Spleen (tissue), 13 donors: ENCODE measurements at regions of chr19 and their contacts with region 1.

Region 1: GRCh38 chr19:54325194-54325621 is 12.2 kb upstream of the LILRA5 start:
- DNase-seq: no peak
- H3K4me3 ChIP-seq: no peak overlapping the region
- H3K27ac ChIP-seq: peak overlapping the region in 4 of 8 donors; percentile 5 to 53 (median 25)
- H3K4me1 ChIP-seq: peaks cover 0 to 42% (median 24%) of the 10 kb centered on the region in 6 donors
- H3K27me3 ChIP-seq: peaks cover 0 to 6% (median 0%) of the 10 kb centered on the region in 7 donors
- CTCF ChIP-seq: peak; percentile 52 to 90 (median 82)
- POLR2A ChIP-seq: no peak

Region 2: GRCh38 chr19:54062643-54063042 is 262.6 kb before region 1 on chr19:
- intact Hi-C with region 1: no loop called
- DNase-seq: peak; percentile 91
- H3K4me3 ChIP-seq: peak overlapping the region in 2 of 8 donors; percentile 2 to 40
- H3K27ac ChIP-seq: peak overlapping the region in 5 of 8 donors; percentile 67 to 82 (median 77)
- H3K4me1 ChIP-seq: peaks cover 0 to 16% (median 0%) of the 10 kb centered on the region in 6 donors
- H3K27me3 ChIP-seq: peaks cover 0 to 54% (median 0%) of the 10 kb centered on the region in 7 donors
- CTCF ChIP-seq: no peak
- POLR2A ChIP-seq: no peak

Region 3: DNA sequence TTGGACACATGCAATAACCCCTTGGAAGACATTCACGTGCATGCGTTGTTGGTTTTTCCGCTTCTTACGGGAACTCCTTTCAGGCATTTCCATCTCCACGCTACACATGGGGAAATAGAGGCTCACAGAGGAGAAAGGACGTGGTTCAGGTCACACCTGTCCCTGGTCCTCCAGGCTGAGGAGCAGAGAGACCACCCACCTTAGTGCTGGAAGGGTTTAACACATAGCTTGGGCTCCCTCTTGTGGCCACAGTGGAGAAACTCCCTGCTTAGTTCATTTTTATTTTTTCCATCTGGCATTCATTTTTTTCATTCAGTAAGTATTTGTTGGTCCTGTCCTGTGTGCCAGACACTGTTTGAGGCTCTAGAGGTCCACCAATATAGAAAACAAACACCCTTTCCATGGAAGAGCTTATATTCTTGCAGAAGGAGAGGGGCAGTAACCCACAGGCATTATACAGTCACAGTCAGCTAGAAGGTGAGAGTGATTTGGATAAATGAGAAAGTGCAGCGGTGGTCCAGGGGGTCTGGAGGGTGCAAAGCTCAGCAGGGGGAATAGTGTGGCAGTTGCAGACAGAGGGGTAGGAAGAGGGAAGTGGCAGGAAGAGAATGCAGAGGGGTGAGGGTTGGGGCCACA is 65.9 kb after region 1 on chr19:
- intact Hi-C with region 1: loop called (anchors 2 kb)
- DNase-seq: no peak
- H3K4me3 ChIP-seq: no peak overlapping the region
- H3K27ac ChIP-seq: peak overlapping the region in 1 of 8 donors; percentile 86
- H3K4me1 ChIP-seq: peaks cover 9 to 50% (median 42%) of the 10 kb centered on the region in 6 donors
- H3K27me3 ChIP-seq: peaks cover 0 to 63% (median 5%) of the 10 kb centered on the region in 7 donors
- CTCF ChIP-seq: peak; percentile 44 to 86 (median 77)
- POLR2A ChIP-seq: no peak